ENCODE measurements at regions of chr2 and their contacts with region 1.

Region 1: DNA sequence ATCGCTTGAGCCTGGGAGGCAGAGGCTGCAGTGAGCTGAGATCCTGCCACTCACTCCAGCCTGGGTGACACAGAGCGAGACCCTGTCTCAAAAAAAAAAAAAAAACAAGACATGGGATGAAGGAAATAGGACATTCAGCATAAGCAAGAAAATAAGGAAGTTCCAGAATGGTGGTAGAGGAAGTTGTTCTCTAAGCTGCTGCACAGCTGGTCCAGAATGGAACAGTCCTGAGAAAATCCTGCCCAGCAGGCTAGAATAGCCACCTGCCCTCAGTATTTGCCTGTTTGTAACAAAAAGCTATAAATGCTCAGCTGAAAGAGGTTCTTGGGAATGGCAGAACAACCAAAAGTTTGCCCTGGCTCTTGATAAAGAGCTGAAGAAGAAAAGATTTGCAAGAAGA is 11.1 kb upstream of the MAPRE3 start:
- DNase-seq: no peak
- H3K4me3 Mint-ChIP-seq: no peak overlapping the region
- H3K27ac Mint-ChIP-seq: no peak overlapping the region
- H3K4me1 Mint-ChIP-seq: no peaks in the 10 kb centered on the region
- H3K27me3 Mint-ChIP-seq: peaks cover 27% of the 10 kb centered on the region

Region 2: DNA sequence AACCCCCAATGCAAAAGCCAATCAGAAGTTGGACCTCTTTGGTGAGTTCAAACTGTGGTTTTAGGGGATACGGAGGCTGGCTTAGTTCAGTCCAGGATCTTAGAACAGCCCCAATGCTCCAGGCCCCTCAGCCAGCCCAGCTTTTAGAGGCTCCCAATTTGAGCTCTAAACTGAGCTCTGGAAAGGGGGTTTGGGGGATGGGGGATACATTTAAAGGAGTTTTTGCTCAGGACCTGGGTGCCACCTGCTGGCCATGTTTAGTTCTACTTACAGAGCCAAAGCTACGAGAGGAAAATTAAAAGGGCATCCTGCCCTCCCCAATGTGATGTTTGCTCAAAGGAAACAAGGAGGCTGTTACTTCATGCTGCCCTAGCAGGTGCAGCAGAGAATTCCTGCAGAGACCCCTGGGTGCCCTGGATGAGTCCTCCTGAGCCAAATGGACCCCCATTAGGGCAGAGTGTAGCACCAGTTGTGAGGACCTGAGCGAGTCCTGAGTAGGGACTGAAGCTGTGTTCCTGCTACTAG is 57.5 kb after region 1 on chr2:
- intact Hi-C with region 1: loop called (anchors 1 kb)
- DNase-seq: no peak
- H3K4me3 Mint-ChIP-seq: no peak overlapping the region
- H3K27ac Mint-ChIP-seq: no peak overlapping the region
- H3K4me1 Mint-ChIP-seq: no peaks in the 10 kb centered on the region
- H3K27me3 Mint-ChIP-seq: no peaks in the 10 kb centered on the region

Region 3: DNA sequence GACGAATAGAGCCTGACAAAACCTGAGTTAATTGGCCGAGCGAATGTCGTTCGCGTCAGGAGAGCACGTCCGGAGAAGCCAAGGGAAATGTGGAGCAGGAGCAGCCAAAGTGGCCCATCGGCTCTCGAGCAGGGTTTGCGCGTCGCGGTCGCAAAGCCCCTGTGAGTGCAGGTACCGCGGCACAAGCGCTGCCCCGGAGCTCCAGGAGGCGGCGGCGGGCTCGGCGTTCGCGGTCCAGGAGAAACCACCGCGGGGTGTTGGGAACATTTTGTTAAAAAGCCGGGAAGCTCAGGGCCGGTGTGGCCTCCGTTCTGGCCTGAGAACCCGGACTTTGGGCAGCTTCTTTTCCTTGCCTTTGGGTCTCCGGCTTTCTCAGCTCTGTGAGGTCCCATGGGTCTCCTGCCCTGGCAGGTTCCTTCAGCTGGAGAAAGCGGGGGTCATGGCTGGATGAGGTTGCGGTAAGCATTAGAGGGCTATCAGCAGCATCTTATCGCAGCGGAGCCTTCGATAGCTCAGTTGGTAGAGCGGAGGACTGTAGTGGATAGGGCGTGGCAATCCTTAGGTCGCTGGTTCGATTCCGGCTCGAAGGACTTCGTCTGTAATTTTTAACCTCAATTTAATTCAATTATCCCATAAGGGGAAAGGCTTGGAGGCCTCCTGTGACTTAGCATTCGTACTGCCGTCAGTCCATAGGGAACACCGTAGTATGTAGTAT is 91.1 kb after region 1 on chr2:
- intact Hi-C with region 1: loop called (anchors 1 kb)
- DNase-seq: peak; percentile 88
- H3K4me3 Mint-ChIP-seq: peak overlapping the region; percentile 96
- H3K27ac Mint-ChIP-seq: peak overlapping the region; percentile 99
- H3K4me1 Mint-ChIP-seq: peaks cover 36% of the 10 kb centered on the region
- H3K27me3 Mint-ChIP-seq: peaks cover 7% of the 10 kb centered on the region

Region 4: GRCh38 chr2:27095745-27096651 is 136.7 kb after region 1 on chr2:
- intact Hi-C with region 1: loop called (anchors 1 kb)
- DNase-seq: peak; percentile 32
- H3K4me3 Mint-ChIP-seq: peak overlapping the region; percentile 37
- H3K27ac Mint-ChIP-seq: no peak overlapping the region
- H3K4me1 Mint-ChIP-seq: peaks cover 16% of the 10 kb centered on the region
- H3K27me3 Mint-ChIP-seq: no peaks in the 10 kb centered on the region

Region 5: GRCh38 chr2:27191053-27191829 is 231.9 kb after region 1 on chr2:
- intact Hi-C with region 1: loop called (anchors 1 kb)
- DNase-seq: peak; percentile 25
- H3K4me3 Mint-ChIP-seq: no peak overlapping the region
- H3K27ac Mint-ChIP-seq: no peak overlapping the region
- H3K4me1 Mint-ChIP-seq: no peaks in the 10 kb centered on the region
- H3K27me3 Mint-ChIP-seq: no peaks in the 10 kb centered on the region

Region 6: DNA sequence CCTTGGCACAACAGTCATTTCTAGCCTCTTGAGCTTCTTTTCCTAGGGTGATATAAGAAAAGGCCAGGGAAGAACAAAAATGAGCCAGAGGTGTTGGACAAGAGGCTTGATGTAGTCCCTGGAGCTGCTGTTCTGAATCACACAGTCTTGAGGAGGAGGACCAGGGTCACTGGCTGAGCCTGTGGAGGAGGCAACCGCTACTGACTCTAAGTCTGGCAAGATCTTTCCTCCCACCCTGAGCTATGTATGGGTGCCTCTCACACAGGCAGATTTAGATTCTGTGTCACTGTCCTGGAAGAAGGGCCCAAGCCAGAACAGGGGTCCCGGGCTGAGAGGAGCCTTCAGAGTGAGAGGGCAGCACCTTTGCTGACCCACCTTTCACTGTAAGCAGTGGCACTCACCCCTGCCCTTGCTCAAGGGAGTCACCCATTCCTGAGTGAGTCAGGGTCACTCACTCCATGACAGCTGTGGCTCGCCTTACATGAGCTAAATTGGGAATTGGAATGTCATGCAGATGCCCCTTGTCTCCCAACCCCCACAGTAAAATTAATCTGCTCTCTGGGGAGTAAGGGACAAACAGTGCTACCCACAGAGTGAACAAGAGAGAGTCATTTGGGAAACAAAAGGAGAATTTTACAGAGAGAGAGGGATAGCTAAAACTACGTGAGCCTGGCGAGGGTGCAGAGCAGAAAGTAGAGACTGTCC is 322.7 kb after region 1 on chr2 and contains the start of gene TRIM54:
- intact Hi-C with region 1: loop called (anchors 1 kb)
- DNase-seq: no peak
- H3K4me3 Mint-ChIP-seq: no peak within 1 kb of the TSS
- H3K27ac Mint-ChIP-seq: no peak within 1 kb of the TSS
- H3K4me1 Mint-ChIP-seq: peaks cover 6% of the 10 kb centered on the region
- H3K27me3 Mint-ChIP-seq: peaks cover 33% of the 10 kb centered on the region
- total RNA-seq, gene TRIM54: 0.26 TPM in 1 of 2 replicates, not detected in the other

Region 7: DNA sequence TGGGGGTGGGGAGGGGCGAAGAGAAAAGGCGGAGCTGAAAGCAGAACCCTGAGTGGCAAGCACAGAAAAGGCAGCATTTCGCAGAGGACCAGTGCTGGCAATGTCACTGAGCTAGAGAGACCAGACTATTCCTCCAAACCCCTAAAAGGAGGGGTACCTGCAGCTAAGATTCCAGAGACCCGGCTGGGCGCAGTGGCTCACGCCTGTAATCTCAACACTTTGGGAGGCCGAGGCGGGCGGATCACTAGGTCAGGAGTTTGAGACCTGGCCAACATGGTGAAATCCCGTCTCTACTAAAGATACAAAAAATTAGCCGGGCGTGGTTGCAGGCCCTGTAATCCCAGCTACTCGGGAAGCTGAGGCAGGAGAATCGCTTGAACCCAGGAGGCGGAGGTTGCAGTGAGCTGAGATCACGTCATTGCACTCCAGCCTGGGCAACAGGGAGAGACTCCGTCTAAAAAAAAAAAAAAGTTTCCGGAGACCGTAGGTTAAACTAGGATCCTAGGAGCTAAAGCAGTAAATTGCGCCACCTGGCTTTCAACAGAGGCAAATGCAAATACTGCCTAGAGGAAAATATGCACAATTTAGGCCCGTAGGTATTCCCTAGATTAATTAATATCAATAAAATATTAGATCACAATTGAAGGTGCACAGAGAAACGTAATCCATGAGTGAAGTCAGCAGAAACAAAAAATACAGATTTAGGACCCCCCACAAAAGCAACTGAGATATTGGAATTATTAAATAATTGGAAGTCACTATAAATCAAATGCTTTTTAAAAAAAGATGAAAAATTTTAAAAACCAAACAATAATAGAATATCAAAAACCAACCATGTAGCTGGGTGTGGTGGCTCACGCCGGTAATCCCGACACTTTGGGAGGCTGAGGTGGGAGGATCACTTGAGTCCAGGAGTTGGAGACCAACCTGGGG is 344.0 kb after region 1 on chr2:
- intact Hi-C with region 1: loop called (anchors 1 kb)
- DNase-seq: peak; percentile 34
- H3K4me3 Mint-ChIP-seq: peak overlapping the region; percentile 58
- H3K27ac Mint-ChIP-seq: no peak overlapping the region
- H3K4me1 Mint-ChIP-seq: peaks cover 10% of the 10 kb centered on the region
- H3K27me3 Mint-ChIP-seq: peaks cover 17% of the 10 kb centered on the region

Region 8: GRCh38 chr2:27844821-27845255 is 885.5 kb after region 1 on chr2:
- intact Hi-C with region 1: no loop called
- DNase-seq: no peak
- H3K4me3 Mint-ChIP-seq: no peak overlapping the region
- H3K27ac Mint-ChIP-seq: no peak overlapping the region
- H3K4me1 Mint-ChIP-seq: no peaks in the 10 kb centered on the region
- H3K27me3 Mint-ChIP-seq: peaks cover 2% of the 10 kb centered on the region

Measured in activated T-helper 1 cell treated with anti-CD3 and anti-CD28 coated beads, Interleukin-12 subunit alpha, Interleukin-12 subunit beta, Interleukin-2, Interleukin-4 antibody, amounts not matched to agents 30 ng/mL and 10 ng/mL and 1 ng/mL, durations not matched to agents 14 hours and 24 hours and 36 hours (primary cell).